ENCODE measurements at regions of chr1 and their contacts with region 1.

Region 1: GRCh38 chr1:94417978-94418663 is at the start of gene ABCD3:
- DNase-seq: peak; percentile 97
- H3K4me3 Mint-ChIP-seq: no peak within 1 kb of the TSS
- H3K27ac Mint-ChIP-seq: no peak within 1 kb of the TSS
- H3K4me1 Mint-ChIP-seq: peaks cover 44% of the 10 kb centered on the region
- H3K27me3 Mint-ChIP-seq: no peaks in the 10 kb centered on the region
- CTCF ChIP-seq: no peak
- total RNA-seq, gene ABCD3: 51.0 and 59.3 TPM in 2 replicates

Region 2: GRCh38 chr1:94383966-94384408 is 34.1 kb before region 1 on chr1:
- CTCF ChIA-PET with region 1: interaction called, 4 read pairs
- intact Hi-C with region 1: loop called (anchors 1 kb)
- DNase-seq: peak; percentile 61
- H3K4me3 Mint-ChIP-seq: peak overlapping the region; percentile 31
- H3K27ac Mint-ChIP-seq: peak overlapping the region; percentile 90
- H3K4me1 Mint-ChIP-seq: peaks cover 44% of the 10 kb centered on the region
- H3K27me3 Mint-ChIP-seq: no peaks in the 10 kb centered on the region
- CTCF ChIP-seq: no peak

Region 3: GRCh38 chr1:94438692-94439276 is 20.7 kb after region 1 on chr1:
- CTCF ChIA-PET with region 1: no interaction called
- intact Hi-C with region 1: loop called (anchors 2 kb)
- DNase-seq: no peak
- H3K4me3 Mint-ChIP-seq: no peak overlapping the region
- H3K27ac Mint-ChIP-seq: no peak overlapping the region
- H3K4me1 Mint-ChIP-seq: peaks cover 18% of the 10 kb centered on the region
- H3K27me3 Mint-ChIP-seq: no peaks in the 10 kb centered on the region
- CTCF ChIP-seq: no peak

Measured in Calu3 (cell line).